ENCODE measurements at regions of chr12 and their contacts with region 1.

Region 1: DNA sequence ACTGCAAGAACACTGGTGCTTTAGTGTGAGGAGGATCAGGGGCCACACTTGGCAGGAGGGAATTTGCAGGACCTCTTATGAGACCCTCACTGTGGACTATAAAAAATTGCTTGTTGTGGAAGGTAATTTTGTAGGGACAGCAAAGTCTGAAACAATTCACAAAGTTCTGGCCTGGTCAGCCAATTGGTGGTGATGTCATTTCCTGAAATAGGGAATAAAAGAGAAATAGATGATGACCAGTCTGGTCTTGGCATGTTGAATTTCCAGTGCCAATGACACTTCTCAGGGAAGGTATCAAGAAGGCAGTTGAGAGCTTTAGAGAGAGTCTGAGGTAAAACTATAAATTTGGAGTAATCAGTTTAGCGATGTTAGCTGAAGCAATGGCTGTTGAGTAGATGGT is 129.3 kb upstream of the LMNTD1 start:
- DNase-seq: no peak
- H3K4me3 ChIP-seq: no peak overlapping the region
- H3K27ac ChIP-seq: no peak overlapping the region
- H3K4me1 ChIP-seq: peaks cover 0 to 3% of the 10 kb centered on the region in 2 donors
- H3K27me3 ChIP-seq: peaks cover 0 to 3% of the 10 kb centered on the region in 2 donors
- CTCF ChIP-seq: no peak
- POLR2A ChIP-seq: no peak

Region 2: GRCh38 chr12:25670076-25671055 is 12.1 kb before region 1 on chr12:
- intact Hi-C with region 1: no loop called
- DNase-seq: no peak
- H3K4me3 ChIP-seq: no peak overlapping the region
- H3K27ac ChIP-seq: no peak overlapping the region
- H3K4me1 ChIP-seq: no peaks in the 10 kb centered on the region
- H3K27me3 ChIP-seq: no peaks in the 10 kb centered on the region
- CTCF ChIP-seq: no peak
- POLR2A ChIP-seq: no peak

Region 3: DNA sequence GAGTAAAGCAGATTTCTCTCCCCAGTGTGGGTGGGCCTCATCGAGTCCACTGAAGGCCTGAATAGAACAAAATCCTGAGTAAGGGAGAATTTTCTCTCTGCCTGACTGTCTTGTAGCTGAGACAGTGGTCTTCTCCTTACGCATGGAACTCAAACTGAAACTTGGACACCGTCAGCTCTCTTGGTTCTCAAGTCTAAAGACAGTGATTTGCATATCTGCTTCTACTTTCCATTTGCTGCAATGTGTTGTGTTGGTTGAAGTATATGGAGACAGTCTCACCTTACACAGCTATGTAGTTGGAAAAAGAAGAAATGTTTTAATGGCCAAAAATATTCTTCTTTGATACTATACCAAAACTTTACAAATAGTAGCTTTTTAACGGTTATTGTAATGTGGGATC is 30.8 kb after region 1 on chr12:
- intact Hi-C with region 1: loop called (anchors 1 kb)
- DNase-seq: no peak
- H3K4me3 ChIP-seq: no peak overlapping the region
- H3K27ac ChIP-seq: no peak overlapping the region
- H3K4me1 ChIP-seq: no peaks in the 10 kb centered on the region
- H3K27me3 ChIP-seq: no peaks in the 10 kb centered on the region
- CTCF ChIP-seq: no peak
- POLR2A ChIP-seq: no peak

Measured in uterus (tissue), 4 donors.